ENCODE measurements at regions of chr18 and their contacts with region 1.

Region 1: GRCh38 chr18:59660786-59661743 is 36.2 kb downstream of the CCBE1 start:
- H3K4me3 ChIP-seq: no peak overlapping the region
- H3K27ac ChIP-seq: no peak overlapping the region
- H3K4me1 ChIP-seq: peaks cover 12% of the 10 kb centered on the region
- CTCF ChIP-seq: no peak

Region 2: GRCh38 chr18:59516356-59517155 is 144.5 kb before region 1 on chr18:
- CTCF ChIA-PET with region 1: no interaction called
- POLR2A ChIA-PET with region 1: interaction called, 10 read pairs
- H3K4me3 ChIP-seq: no peak overlapping the region
- H3K27ac ChIP-seq: no peak overlapping the region; the same call in 1 of the 2 replicates
- H3K4me1 ChIP-seq: peaks cover 22% of the 10 kb centered on the region
- CTCF ChIP-seq: no peak

Region 3: DNA sequence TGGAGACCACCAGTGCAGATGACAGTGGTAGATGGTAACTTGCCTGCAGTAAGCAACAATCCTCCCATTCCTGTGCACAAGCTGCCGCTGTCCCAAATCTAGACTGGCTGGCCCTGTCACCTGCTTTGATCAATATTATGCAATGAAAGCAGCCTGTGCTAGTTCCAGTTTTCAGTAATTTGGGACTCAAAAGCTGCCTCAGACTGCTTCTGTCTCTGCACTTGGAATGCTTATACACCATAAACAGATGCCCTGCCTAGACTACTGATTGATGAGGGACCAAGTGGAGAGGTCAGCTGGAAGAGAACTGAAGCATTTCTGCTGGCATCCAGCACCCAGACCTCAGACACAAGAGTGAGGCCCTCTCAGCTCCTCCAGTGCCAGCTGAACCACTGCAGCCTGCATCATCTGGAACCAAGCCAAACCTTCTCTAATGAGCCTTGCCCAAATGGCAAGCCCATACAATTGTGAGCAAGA is 11.2 kb after region 1 on chr18:
- CTCF ChIA-PET with region 1: interaction called, 12 read pairs
- POLR2A ChIA-PET with region 1: interaction called, 6 read pairs
- H3K4me3 ChIP-seq: no peak overlapping the region
- H3K27ac ChIP-seq: no peak overlapping the region
- H3K4me1 ChIP-seq: peaks cover 14% of the 10 kb centered on the region; the same call in 1 of the 2 replicates
- CTCF ChIP-seq: no peak

Region 4: DNA sequence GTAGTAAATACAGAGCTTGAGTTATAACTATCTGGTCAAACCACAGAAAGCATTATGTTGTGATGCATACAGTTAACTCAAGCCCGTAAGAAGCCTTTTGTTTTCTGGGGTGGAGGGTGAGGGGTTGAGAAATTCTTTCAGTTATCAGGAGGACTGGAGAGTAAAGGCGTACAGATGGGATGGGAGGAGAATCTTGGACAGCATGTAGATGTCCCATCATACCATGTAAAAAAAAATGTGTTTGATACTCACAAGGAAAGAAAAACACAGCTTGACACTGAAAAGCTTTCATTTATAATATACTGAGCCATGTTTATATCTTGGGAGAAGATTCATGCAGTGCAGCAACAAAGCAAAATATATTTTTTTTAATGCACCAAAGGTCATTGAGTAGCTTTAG is 23.7 kb after region 1 on chr18:
- CTCF ChIA-PET with region 1: no interaction called
- POLR2A ChIA-PET with region 1: no interaction called
- H3K4me3 ChIP-seq: no peak overlapping the region
- H3K27ac ChIP-seq: no peak overlapping the region
- H3K4me1 ChIP-seq: peaks cover 12% of the 10 kb centered on the region
- CTCF ChIP-seq: no peak

Measured in HEK293 (cell line).